Motor neuron (in vitro differentiated cells): ENCODE measurements at regions of chr2 and their contacts with region 1.

Region 1: GRCh38 chr2:204335451-204336058 is 209.7 kb upstream of the PARD3B start:
- ATAC-seq: peak in 5 of 8 experiments; percentile 88 to 97 (median 96)
- H3K4me3 ChIP-seq: no peak overlapping the region
- H3K27ac ChIP-seq: peak overlapping the region in 1 of 2 donors; percentile 10
- H3K4me1 ChIP-seq: peaks cover 18 to 32% of the 10 kb centered on the region in 2 donors

Region 2: DNA sequence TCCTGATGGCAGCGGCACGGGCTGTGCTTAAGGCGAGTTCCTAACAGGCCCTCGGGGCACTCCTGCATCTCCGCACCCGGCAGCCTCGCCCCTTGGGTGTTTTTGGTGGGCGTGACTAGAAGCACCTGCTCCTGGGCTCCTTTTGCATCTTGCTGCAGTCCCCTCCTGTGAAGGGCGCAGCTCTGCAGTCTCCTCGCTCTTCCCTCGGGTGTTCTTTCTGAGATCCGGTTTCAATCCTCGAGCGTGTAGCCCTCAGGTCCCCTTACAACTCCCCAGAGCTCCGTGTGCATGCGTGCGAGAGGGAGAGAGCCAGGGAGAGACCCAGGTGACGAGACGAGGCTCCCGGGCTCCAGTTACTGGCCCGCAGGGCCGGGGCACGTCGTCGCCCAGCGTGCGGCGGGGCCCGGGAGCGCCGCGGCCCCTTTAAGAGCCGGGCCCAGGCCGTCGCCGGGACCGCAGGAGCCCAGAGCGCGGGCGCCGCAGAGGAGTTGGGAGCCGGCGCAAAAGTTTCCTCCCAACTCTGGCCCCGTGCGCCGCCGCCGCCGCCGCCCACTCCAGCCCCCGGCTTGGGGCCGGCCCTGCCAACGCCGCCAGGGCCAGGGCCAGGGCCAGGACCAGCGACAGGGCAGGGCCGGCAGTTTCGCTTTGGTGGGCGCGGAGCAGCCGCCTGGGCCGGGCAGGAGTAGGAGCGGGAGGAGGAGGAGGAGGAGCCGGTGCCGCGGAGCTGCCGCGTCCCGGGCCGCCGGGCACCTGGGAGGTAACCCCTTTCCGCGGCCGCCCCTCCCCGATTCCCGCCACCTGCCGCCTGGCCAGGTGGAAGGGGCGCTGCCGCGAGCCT is 209.7 kb after region 1 on chr2 and contains the start of gene PARD3B:
- in situ Hi-C with region 1: loop called in 1 of 9 experiments (anchors 10 kb)
- ATAC-seq: peak; percentile 88 to 94 (median 92)
- H3K4me3 ChIP-seq: peak within 1 kb of the TSS; percentile 51 to 92 (median 70)
- H3K27ac ChIP-seq: peak within 1 kb of the TSS in 1 of 2 donors; percentile 45
- H3K4me1 ChIP-seq: peaks cover 4 to 10% of the 10 kb centered on the region in 2 donors
- total RNA-seq, gene PARD3B: 3.1 to 24.3 (median 10.4) TPM